ENCODE measurements at regions of chr18 and their contacts with region 1.

Region 1: DNA sequence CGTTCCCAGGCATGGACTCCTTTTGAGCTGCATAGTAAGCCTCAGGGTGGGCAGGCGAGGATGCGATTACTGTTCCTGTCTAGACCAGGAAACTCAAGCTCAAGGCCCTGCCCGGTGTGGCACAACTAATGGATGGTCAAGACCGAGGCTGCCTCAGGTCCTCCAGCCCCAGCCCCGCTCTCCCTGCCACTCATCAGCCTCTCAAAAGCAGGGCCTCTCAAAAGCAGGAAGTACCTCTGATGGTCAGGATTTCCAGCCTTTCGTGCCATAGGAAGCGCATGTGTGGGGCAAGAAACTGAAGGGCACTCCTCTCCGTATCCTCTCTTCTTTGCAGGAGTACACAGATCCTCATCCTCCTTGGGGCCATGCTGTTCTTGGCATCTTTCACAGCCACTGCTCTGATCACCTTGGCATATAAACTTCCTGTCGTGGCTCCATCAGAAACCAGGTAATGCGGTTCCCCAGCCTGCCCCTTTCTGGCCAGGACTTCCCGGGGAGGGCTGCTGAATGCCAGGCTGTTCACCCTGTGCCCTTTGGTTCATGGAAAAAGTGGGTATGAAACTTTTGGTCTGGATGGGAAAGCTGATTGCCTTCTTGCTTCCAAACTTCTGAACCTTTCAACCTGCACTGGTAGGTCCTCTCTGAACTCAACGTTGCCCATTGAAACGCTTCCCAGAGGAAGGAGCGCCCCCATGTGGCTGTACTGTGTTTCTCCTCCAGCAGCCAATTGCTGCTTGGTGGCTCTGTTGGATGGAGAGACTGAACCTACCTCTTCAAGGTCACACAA is 82.8 kb upstream of the SEC11C start:
- DNase-seq: peak; percentile 84
- ATAC-seq: peak; percentile 80
- H3K4me3 ChIP-seq: no peak overlapping the region
- H3K4me3 Mint-ChIP-seq: no peak overlapping the region
- H3K27ac ChIP-seq: no peak overlapping the region
- H3K27ac Mint-ChIP-seq: peak overlapping the region; percentile 23
- H3K4me1 ChIP-seq: peaks cover 5 to 8% of the 10 kb centered on the region in 2 donors
- H3K4me1 Mint-ChIP-seq: peaks cover 13% of the 10 kb centered on the region
- H3K27me3 ChIP-seq: no peaks in the 10 kb centered on the region
- H3K27me3 Mint-ChIP-seq: peaks cover 6% of the 10 kb centered on the region
- CTCF ChIP-seq: peak; percentile 91

Region 2: GRCh38 chr18:58863539-58864145 is 193.3 kb before region 1 on chr18:
- CTCF ChIA-PET with region 1: interaction called, 3 read pairs
- POLR2A ChIA-PET with region 1: no interaction called
- intact Hi-C with region 1: loop called (anchors 10 kb)
- DNase-seq: peak; percentile 77
- ATAC-seq: peak; percentile 67
- H3K4me3 ChIP-seq: peak overlapping the region in 4 of 5 experiments; percentile 26 to 57 (median 52)
- H3K4me3 Mint-ChIP-seq: peak overlapping the region; percentile 83
- H3K27ac ChIP-seq: peak overlapping the region; percentile 38 to 81
- H3K27ac Mint-ChIP-seq: peak overlapping the region; percentile 91
- H3K4me1 ChIP-seq: peaks cover 20 to 24% of the 10 kb centered on the region in 2 donors
- H3K4me1 Mint-ChIP-seq: peaks cover 41% of the 10 kb centered on the region
- H3K27me3 ChIP-seq: no peaks in the 10 kb centered on the region
- H3K27me3 Mint-ChIP-seq: no peaks in the 10 kb centered on the region
- CTCF ChIP-seq: no peak

Region 3: GRCh38 chr18:58896268-58896667 is 160.6 kb before region 1 on chr18:
- CTCF ChIA-PET with region 1: interaction called, 5 read pairs
- POLR2A ChIA-PET with region 1: no interaction called
- intact Hi-C with region 1: loop called (anchors 5 kb)
- DNase-seq: peak; percentile 72
- ATAC-seq: peak; percentile 88
- H3K4me3 ChIP-seq: peak overlapping the region in 4 of 5 experiments; percentile 31 to 58 (median 50)
- H3K4me3 Mint-ChIP-seq: peak overlapping the region; percentile 79
- H3K27ac ChIP-seq: peak overlapping the region; percentile 70 to 86
- H3K27ac Mint-ChIP-seq: peak overlapping the region; percentile 86
- H3K4me1 ChIP-seq: peaks cover 58 to 62% of the 10 kb centered on the region in 2 donors
- H3K4me1 Mint-ChIP-seq: peaks cover 76% of the 10 kb centered on the region
- H3K27me3 ChIP-seq: no peaks in the 10 kb centered on the region
- H3K27me3 Mint-ChIP-seq: no peaks in the 10 kb centered on the region
- CTCF ChIP-seq: no peak

Region 4: DNA sequence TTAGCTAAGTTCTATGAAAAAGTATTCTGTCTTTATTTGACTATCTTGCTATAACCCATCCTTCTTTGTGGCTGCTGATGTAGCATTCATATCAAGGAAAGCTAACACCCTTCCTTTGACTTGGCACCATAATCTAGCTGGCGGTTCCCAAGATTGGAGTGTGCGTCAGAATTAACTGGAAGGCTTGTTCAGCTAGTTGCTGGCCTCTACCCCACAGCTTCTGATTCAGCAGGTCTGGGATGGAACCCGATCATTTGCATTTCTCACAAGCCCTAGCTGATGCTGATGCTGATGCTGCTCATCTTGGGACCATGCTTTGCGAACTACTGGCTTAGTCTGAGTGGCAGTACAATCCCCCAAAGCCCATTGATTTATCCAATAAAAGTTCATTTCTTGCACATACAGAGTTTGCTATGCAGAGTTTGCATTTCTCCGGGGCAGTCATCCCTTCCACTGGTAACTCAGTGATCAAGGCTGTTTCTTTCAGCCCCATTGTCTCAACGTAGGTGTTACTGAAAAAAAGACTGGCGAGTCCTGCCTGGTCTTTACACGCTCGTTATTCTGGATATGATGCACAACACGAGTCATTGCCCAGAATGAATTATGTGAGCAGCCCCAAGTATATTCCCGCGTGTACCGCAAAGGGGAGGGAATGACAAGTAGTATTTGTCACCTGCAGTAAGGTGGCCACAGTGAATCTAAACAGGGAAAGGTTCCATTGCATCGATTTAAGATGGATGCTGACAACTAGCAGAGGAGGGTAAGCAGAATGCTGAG is 95.8 kb before region 1 on chr18:
- CTCF ChIA-PET with region 1: interaction called, 6 read pairs
- POLR2A ChIA-PET with region 1: no interaction called
- intact Hi-C with region 1: loop called (anchors 10 kb)
- DNase-seq: no peak
- ATAC-seq: no peak
- H3K4me3 ChIP-seq: no peak overlapping the region
- H3K4me3 Mint-ChIP-seq: peak overlapping the region; percentile 35
- H3K27ac ChIP-seq: peak overlapping the region in 1 of 2 donors; percentile 16
- H3K27ac Mint-ChIP-seq: peak overlapping the region; percentile 77
- H3K4me1 ChIP-seq: peaks cover 32 to 33% of the 10 kb centered on the region in 2 donors
- H3K4me1 Mint-ChIP-seq: peaks cover 50% of the 10 kb centered on the region
- H3K27me3 ChIP-seq: no peaks in the 10 kb centered on the region
- H3K27me3 Mint-ChIP-seq: no peaks in the 10 kb centered on the region
- CTCF ChIP-seq: no peak

Region 5: DNA sequence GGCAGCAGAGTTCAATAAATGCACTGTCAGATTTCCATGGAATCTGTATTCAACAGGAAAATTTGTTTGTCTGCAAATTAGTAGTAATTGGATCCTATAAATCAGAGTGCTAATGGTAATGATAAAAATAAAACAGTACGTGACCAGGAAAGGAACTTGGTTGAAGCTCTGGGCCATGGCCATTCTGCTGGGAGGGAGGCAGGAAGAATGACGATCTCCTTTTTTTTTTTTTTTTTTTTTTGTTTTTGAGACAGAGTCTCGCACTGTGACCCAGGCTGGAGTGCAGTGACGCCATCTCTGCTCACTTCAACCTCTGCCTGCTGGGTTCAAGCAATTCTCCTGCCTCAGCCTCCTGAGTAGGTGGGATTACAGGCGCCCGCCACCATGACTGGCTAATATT is 12.0 kb before region 1 on chr18:
- CTCF ChIA-PET with region 1: interaction called, 4 read pairs
- POLR2A ChIA-PET with region 1: interaction called, 12 read pairs
- intact Hi-C with region 1: no loop called
- DNase-seq: no peak
- ATAC-seq: no peak
- H3K4me3 ChIP-seq: no peak overlapping the region
- H3K4me3 Mint-ChIP-seq: no peak overlapping the region
- H3K27ac ChIP-seq: no peak overlapping the region
- H3K27ac Mint-ChIP-seq: no peak overlapping the region
- H3K4me1 ChIP-seq: peaks cover 0 to under 1% of the 10 kb centered on the region in 2 donors
- H3K4me1 Mint-ChIP-seq: peaks cover 1% of the 10 kb centered on the region
- H3K27me3 ChIP-seq: no peaks in the 10 kb centered on the region
- H3K27me3 Mint-ChIP-seq: no peaks in the 10 kb centered on the region
- CTCF ChIP-seq: no peak

Region 6: GRCh38 chr18:59070181-59070912 is 13.4 kb after region 1 on chr18:
- CTCF ChIA-PET with region 1: interaction called, 45 read pairs
- POLR2A ChIA-PET with region 1: interaction called, 4 read pairs
- intact Hi-C with region 1: loop called (anchors 1 kb)
- DNase-seq: peak; percentile 85
- ATAC-seq: peak; percentile 90
- H3K4me3 ChIP-seq: no peak overlapping the region
- H3K4me3 Mint-ChIP-seq: no peak overlapping the region
- H3K27ac ChIP-seq: no peak overlapping the region
- H3K27ac Mint-ChIP-seq: no peak overlapping the region
- H3K4me1 ChIP-seq: peaks cover 12 to 20% of the 10 kb centered on the region in 2 donors
- H3K4me1 Mint-ChIP-seq: peaks cover 14% of the 10 kb centered on the region
- H3K27me3 ChIP-seq: no peaks in the 10 kb centered on the region
- H3K27me3 Mint-ChIP-seq: no peaks in the 10 kb centered on the region
- CTCF ChIP-seq: peak; percentile 90

Measured in B cell (primary cell).